Naive thymus-derived CD8-positive, alpha-beta T cell (primary cell): ENCODE measurements at regions of chr11 and their contacts with region 1.

Region 1: GRCh38 chr11:96088914-96089313 is 165.0 kb upstream of the MTMR2 start:
- DNase-seq: no peak
- ATAC-seq: no peak
- H3K4me3 Mint-ChIP-seq: no peak overlapping the region
- H3K27ac Mint-ChIP-seq: peak overlapping the region in 5 of 10 donors; percentile 7 to 61 (median 9)
- H3K4me1 Mint-ChIP-seq: peaks cover 28 to 77% (median 70%) of the 10 kb centered on the region in 4 donors
- H3K27me3 Mint-ChIP-seq: no peaks in the 10 kb centered on the region

Region 2: DNA sequence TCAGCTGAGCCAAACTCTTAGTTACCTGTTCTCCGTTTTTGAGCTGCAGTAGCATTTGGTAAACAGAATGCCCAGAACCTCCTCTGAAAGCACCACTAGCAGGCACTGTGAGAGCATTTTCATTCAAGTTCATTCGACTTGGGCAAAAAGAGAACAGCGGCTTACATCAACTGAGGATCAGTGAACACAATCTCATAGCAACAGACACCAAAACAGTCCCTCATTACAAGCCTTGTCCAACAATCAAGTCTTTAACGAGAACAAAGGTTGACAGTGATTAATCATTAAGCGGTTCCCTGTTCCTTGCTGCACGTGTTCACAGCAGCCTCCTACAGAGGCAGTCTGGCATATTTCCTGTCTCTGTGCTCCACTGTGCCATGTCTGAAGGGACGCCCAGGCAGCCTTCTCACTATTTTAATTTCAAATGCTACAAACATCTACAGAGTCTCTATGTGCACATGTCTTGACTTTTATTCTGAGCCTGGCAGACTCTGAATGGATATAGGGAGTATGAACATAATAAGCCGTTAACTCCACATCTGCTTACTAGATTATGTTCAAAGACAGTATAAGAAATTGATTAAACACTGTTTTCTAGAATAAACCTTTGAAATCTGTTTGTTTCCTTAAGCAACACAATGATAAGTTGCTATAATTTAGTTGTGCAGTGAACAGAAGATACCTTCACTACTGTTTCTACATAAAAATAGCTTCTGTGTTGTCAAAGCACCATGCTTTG is 76.7 kb before region 1 on chr11:
- POLR2A ChIA-PET with region 1: interaction called, 10 read pairs
- DNase-seq: peak in 9 of 10 donors; percentile 37 to 82 (median 65)
- ATAC-seq: peak; percentile 74
- H3K4me3 Mint-ChIP-seq: peak overlapping the region; percentile 32 to 81 (median 72)
- H3K27ac Mint-ChIP-seq: peak overlapping the region in 9 of 10 donors; percentile 93 to 99 (median 96)
- H3K4me1 Mint-ChIP-seq: peaks cover 23 to 69% (median 61%) of the 10 kb centered on the region in 4 donors
- H3K27me3 Mint-ChIP-seq: no peaks in the 10 kb centered on the region